Caco-2 (cell line): ENCODE measurements at regions of chr13 and their contacts with region 1.

Region 1: GRCh38 chr13:76223565-76223964 is 587.4 kb downstream of the LMO7 start:
- DNase-seq: peak in 1 of 2 experiments; percentile 45
- H3K4me3 ChIP-seq: no peak overlapping the region
- H3K4me3 Mint-ChIP-seq: no peak overlapping the region
- H3K27ac Mint-ChIP-seq: no peak overlapping the region
- H3K4me1 ChIP-seq: no peaks in the 10 kb centered on the region
- H3K4me1 Mint-ChIP-seq: no peaks in the 10 kb centered on the region
- H3K27me3 ChIP-seq: no peaks in the 10 kb centered on the region
- H3K27me3 Mint-ChIP-seq: no peaks in the 10 kb centered on the region
- CTCF ChIP-seq: peak; percentile 25 to 47

Region 2: DNA sequence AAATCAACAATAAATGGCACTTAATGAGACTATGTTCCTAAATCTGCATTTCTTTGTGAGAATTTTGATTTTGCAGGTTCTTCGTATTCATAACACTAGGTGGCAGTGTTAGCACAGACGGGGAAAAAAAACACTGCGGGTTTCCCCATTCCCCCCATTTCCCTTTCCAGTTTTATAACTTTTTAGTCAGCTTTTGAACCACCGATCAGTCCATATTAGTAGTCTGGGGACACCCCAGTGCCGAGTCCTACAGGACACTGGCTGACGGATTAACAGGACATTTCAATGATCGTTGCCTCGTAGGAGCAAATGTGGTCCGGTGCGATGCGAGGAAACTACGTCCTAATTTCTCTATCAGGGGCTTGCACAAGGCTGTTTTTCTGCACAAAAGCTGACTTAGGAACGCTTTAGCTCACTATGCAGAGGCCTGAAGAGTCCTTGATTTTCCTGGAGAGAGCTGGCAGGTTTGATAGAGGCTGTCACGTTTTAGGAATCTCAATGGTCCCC is 353.1 kb before region 1 on chr13:
- CTCF ChIA-PET with region 1: no interaction called
- POLR2A ChIA-PET with region 1: no interaction called
- intact Hi-C with region 1: loop called (anchors 1 kb)
- DNase-seq: peak in 1 of 2 experiments; percentile 46
- H3K4me3 ChIP-seq: no peak overlapping the region
- H3K4me3 Mint-ChIP-seq: peak overlapping the region; percentile 36
- H3K27ac Mint-ChIP-seq: no peak overlapping the region
- H3K4me1 ChIP-seq: no peaks in the 10 kb centered on the region
- H3K4me1 Mint-ChIP-seq: peaks cover 13% of the 10 kb centered on the region
- H3K27me3 ChIP-seq: no peaks in the 10 kb centered on the region
- H3K27me3 Mint-ChIP-seq: no peaks in the 10 kb centered on the region
- CTCF ChIP-seq: peak; percentile 71 to 85